Activated CD4-positive, alpha-beta memory T cell treated with anti-CD3 and anti-CD28 coated beads, Interleukin-2, amount 10 ng/mL, durations not matched to agents 7 days and 5 days (primary cell): ENCODE measurements at regions of chr6 and their contacts with region 1.

Region 1: DNA sequence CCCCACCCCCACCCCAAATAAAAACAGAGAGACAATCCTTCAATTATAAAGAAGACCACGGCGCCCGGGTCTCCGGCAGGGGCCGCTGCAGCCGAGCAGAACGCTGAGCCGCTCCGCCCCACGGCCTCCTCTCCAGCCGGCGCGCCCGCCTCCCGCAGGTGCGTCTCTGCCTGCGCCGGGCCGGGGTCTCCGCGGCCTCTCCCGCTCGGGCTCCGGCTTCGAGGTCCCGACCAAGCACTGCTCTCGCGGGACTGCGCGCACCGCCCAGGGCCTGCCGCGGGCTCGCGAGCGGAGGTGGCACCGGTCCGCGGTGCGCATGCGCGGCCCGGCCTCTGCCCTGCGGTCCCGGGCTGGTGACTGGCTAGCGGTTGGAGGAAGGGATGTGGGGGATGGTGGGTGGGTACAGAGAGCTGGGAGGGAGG is 241 bp upstream of the SIRT5 start:
- DNase-seq: peak; percentile 92
- H3K4me3 Mint-ChIP-seq: peak overlapping the region; percentile 97
- H3K27ac Mint-ChIP-seq: peak overlapping the region; percentile 99
- H3K4me1 Mint-ChIP-seq: peaks cover 28% of the 10 kb centered on the region
- H3K27me3 Mint-ChIP-seq: peaks cover 1% of the 10 kb centered on the region

Region 2: GRCh38 chr6:13336553-13336952 is 237.6 kb before region 1 on chr6:
- CTCF ChIA-PET with region 1: interaction called, 37 read pairs
- POLR2A ChIA-PET with region 1: interaction called, 4 read pairs
- DNase-seq: peak; percentile 67
- H3K4me3 Mint-ChIP-seq: no peak overlapping the region
- H3K27ac Mint-ChIP-seq: no peak overlapping the region
- H3K4me1 Mint-ChIP-seq: peaks cover 12% of the 10 kb centered on the region
- H3K27me3 Mint-ChIP-seq: peaks cover 5% of the 10 kb centered on the region

Region 3: GRCh38 chr6:13355043-13355951 is 218.9 kb before region 1 on chr6:
- CTCF ChIA-PET with region 1: interaction called, 23 read pairs
- POLR2A ChIA-PET with region 1: interaction called, 6 read pairs
- DNase-seq: peak; percentile 28
- H3K4me3 Mint-ChIP-seq: peak overlapping the region; percentile 63
- H3K27ac Mint-ChIP-seq: peak overlapping the region; percentile 98
- H3K4me1 Mint-ChIP-seq: peaks cover 44% of the 10 kb centered on the region
- H3K27me3 Mint-ChIP-seq: no peaks in the 10 kb centered on the region

Region 4: DNA sequence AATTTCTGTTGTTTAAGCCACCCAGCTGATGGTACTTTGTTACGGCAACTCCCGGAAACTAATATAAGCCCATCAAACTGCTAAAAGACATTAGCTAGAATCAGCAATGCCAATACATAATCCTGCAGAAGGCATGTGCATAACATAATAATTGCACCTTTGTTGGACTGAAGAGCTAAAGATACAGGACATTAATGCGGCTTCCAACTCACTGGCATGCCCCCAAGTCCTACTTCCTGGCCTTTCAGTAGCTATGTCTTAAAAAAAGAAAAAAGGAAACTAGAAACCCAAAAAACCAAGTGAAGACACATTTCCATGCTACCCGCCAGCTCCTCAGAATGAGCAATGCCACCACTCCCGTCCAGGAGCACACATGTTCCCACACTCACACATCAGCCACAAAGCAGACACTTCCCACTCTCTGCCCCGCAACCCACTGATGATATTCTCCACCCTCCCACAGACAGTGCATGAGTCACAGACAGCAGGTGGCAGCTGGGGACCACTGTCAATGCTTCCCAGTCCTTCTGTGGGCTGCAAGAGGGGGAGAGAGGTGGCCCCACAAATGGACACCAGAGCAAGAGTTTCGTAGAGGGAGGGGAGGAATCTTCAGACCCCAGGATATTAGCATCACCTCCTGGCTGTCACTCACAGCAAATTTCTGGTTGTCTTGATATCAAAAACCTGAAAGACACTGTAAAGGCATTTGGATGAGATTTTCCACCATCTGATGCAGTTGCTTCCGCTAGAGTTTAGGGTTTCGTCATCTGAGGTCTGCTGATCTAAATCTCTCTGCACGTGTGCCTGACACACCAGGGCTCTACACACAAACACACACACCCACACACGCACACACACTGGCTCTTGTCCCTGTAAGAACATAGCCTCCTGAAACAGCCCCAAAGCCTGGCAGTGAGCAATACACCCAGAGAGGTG is 119.6 kb before region 1 on chr6:
- CTCF ChIA-PET with region 1: interaction called, 11 read pairs
- POLR2A ChIA-PET with region 1: interaction called, 3 read pairs
- DNase-seq: peak; percentile 67
- H3K4me3 Mint-ChIP-seq: no peak overlapping the region
- H3K27ac Mint-ChIP-seq: peak overlapping the region; percentile 8
- H3K4me1 Mint-ChIP-seq: peaks cover 28% of the 10 kb centered on the region
- H3K27me3 Mint-ChIP-seq: no peaks in the 10 kb centered on the region

Region 5: DNA sequence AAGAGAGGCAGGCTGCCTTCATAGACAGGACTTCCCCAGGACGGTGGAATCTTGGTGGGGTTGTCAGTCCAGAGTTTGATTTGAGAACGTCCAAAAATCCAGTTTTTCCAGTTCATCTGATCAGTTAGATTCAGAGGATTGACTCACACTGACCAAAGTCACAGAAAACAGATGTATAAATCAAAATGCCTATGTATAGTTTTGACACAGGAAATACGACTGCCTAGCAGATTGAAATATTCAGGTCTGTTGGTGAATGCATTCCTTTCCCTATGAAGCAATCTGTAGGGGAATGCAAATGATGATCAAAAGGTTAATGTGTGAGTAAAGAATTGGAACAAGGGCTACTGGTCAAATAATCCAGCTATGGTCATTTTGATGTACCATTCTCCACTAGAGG is 57.0 kb before region 1 on chr6:
- CTCF ChIA-PET with region 1: no interaction called
- POLR2A ChIA-PET with region 1: no interaction called
- DNase-seq: no peak
- H3K4me3 Mint-ChIP-seq: no peak overlapping the region
- H3K27ac Mint-ChIP-seq: no peak overlapping the region
- H3K4me1 Mint-ChIP-seq: no peaks in the 10 kb centered on the region
- H3K27me3 Mint-ChIP-seq: peaks cover 13% of the 10 kb centered on the region

Region 6: GRCh38 chr6:13559251-13559650 is 14.9 kb before region 1 on chr6:
- CTCF ChIA-PET with region 1: interaction called, 23 read pairs
- POLR2A ChIA-PET with region 1: interaction called, 6 read pairs
- DNase-seq: no peak
- H3K4me3 Mint-ChIP-seq: no peak overlapping the region
- H3K27ac Mint-ChIP-seq: no peak overlapping the region
- H3K4me1 Mint-ChIP-seq: no peaks in the 10 kb centered on the region
- H3K27me3 Mint-ChIP-seq: peaks cover 14% of the 10 kb centered on the region

Region 7: DNA sequence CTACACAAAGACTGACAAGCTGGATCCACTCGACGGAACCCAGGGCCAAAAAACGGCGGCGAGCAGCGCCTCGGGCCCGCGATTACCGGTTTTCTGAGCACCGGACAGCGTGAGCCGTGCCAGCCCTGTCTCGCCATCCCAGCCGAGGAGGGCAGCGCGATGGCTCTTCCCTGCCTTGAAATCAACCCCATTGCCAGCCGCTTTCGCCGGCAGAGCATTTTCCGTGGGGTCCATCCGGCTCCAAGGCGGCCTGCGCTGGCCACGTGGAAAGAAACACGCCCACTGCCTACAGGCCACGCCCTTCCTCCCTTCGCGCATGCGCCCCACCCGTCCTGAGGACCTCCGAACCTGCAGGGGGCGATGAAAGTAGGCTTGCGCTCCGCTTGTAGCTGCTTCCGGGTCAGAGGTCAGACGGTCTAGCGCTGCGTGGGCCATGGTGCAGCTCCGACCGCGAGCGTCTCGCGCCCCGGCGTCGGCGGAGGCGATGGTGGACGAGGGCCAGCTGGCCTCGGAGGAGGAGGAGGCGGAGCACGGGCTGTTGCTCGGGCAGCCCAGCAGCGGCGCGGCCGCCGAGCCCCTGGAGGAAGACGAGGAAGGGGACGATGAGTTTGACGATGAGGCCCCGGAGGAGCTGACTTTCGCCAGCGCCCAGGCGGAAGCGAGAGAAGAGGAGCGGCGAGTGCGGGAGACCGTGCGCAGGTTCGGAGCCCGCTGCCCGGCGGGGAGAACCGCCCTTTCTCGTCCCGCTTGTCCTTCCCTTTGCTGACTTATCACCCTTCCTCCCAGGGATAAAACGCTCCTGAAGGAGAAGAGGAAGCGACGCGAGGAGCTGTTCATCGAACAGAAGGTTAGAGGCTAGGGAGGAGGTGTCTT is 41.0 kb after region 1 on chr6 and contains the start of gene NOL7:
- CTCF ChIA-PET with region 1: interaction called, 49 read pairs
- POLR2A ChIA-PET with region 1: interaction called, 104 read pairs
- DNase-seq: peak; percentile 98
- H3K4me3 Mint-ChIP-seq: peak within 1 kb of the TSS; percentile 99
- H3K27ac Mint-ChIP-seq: peak within 1 kb of the TSS; percentile 93
- H3K4me1 Mint-ChIP-seq: peaks cover 66% of the 10 kb centered on the region
- H3K27me3 Mint-ChIP-seq: no peaks in the 10 kb centered on the region
- total RNA-seq, gene NOL7: 54.0 to 57.8 TPM

Region 8: DNA sequence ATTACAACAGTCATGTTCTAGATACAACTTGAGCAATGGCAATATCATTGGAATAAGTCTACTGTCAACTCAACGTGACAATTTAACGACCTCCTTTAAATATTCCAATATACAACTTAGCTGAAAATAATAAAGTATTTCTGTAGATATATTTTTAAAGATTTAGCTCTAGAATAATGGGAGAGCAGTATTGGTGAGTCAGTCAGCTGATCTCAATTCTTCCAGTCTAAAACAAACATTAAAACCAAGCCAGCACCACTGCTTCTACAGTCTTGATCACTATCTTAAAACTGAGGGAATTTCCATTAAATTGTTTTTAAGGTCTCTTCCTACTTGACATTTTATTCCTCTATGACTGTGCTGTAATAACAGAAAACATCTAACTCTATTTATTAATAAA is 79.1 kb after region 1 on chr6:
- CTCF ChIA-PET with region 1: no interaction called
- POLR2A ChIA-PET with region 1: no interaction called
- DNase-seq: no peak
- H3K4me3 Mint-ChIP-seq: no peak overlapping the region
- H3K27ac Mint-ChIP-seq: no peak overlapping the region
- H3K4me1 Mint-ChIP-seq: peaks cover 14% of the 10 kb centered on the region
- H3K27me3 Mint-ChIP-seq: no peaks in the 10 kb centered on the region